ENCODE measurements at regions of chr14 and their contacts with region 1.

Region 1: DNA sequence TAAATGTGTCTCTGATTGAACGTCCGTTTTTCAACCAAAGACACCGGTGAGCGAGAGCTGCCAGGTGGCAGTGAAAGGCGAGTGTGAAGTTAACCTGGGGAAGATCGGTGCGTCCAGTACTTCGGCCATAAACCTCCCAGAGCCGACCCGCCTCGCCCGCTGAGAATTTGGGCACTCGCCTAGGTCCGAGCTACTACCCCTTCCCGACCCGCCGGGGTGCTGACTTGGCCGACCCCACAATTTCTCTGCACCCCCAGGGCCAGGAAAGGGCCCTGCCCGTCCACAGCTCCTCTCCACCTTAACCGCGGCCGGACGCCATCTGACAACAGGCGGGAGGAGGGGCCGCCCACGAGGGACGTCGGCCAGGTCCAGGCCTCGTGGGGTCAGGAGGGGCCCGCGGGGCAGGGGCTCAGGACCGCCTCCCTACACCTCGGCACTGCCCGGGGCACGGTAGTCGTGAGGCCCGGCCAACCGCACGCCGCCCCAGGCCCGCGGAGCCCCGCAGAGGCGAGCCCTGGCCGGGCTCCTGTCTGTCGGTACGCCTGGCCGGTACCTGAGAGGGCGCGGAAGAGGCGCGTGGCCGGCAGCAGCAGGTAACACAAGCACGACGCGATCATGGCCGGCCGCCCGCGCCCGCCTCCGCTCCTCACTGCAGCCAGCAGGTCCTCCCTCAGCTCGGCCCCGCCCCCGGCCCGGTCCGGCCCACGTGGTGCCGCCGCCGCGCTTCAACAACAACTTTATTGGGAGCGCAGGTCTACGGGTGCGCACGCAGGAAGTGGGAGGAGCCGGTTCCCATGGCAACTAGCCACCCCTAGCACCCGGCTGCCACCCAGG is at the start of gene ANGEL1:
- DNase-seq: peak; percentile 88 to 96 (median 90)
- H3K4me3 ChIP-seq: peak within 1 kb of the TSS; percentile 65 to 98 (median 91)
- H3K27ac ChIP-seq: peak within 1 kb of the TSS; percentile 67 to 96 (median 90)
- H3K27me3 ChIP-seq: no peaks in the 10 kb centered on the region
- CTCF ChIP-seq: peak in 32 of 56 donors; percentile 10 to 54 (median 30)
- total RNA-seq, gene ANGEL1: 25.7 to 56.1 (median 41.1) TPM

Region 2: GRCh38 chr14:76710056-76711010 is 102.1 kb before region 1 on chr14:
- intact Hi-C with region 1: loop called in 1 of 2 experiments (anchors 2 kb)
- DNase-seq: peak in 2 of 10 donors; percentile 35 to 40
- H3K4me3 ChIP-seq: no peak overlapping the region
- H3K27ac ChIP-seq: peak overlapping the region in 5 of 59 donors; percentile 8 to 32 (median 27)
- H3K27me3 ChIP-seq: no peaks in the 10 kb centered on the region
- CTCF ChIP-seq: peak; percentile 50 to 92 (median 85)

Region 3: GRCh38 chr14:76793956-76794355 is 18.5 kb before region 1 on chr14:
- intact Hi-C with region 1: no loop called
- DNase-seq: no peak
- H3K4me3 ChIP-seq: no peak overlapping the region
- H3K27ac ChIP-seq: no peak overlapping the region
- H3K27me3 ChIP-seq: no peaks in the 10 kb centered on the region
- CTCF ChIP-seq: no peak

Region 4: DNA sequence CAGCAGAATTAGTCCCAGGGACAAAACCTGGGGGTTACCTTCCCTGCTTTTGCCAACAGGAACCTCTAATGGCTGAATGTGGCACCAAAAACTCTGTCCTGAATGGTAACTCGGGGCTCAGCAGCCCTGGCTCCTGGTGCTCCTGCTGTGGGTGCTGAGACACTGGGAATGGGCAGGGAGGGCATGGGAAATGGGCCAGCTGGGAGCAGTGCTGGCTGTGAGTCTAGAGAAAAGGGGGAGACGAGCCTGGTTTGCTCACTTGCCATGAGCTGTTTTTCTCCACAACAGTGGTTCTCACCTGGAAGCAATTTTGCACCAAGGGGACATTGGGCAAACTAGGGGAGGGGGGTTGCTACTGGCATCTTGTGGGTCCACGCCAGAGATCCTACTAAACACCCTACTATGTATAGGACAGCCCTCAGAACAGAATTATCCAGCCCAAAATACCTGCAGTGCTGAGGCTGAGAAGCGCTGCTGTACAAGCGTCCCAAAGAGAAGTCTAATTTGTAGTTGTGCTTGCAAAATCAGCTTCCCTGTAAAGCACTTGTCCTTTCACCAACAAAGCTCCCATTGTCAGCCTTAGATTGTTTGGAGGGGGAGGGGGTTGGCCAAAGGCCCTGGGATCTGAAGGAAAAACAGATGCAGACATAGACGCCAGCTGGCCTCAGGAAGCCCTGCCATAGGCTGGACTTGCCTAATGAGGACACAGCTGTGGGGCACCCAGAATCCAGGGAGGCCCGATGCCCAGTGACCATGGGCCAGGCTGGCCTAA is 17.4 kb after region 1 on chr14:
- intact Hi-C with region 1: loop called (anchors 2 kb)
- DNase-seq: peak; percentile 24 to 98 (median 91)
- H3K4me3 ChIP-seq: peak overlapping the region in 41 of 59 donors; percentile 1 to 59 (median 26)
- H3K27ac ChIP-seq: peak overlapping the region; percentile 23 to 98 (median 91)
- H3K27me3 ChIP-seq: no peaks in the 10 kb centered on the region
- CTCF ChIP-seq: peak in 13 of 56 donors; percentile 3 to 39 (median 17)

Measured in dorsolateral prefrontal cortex (tissue), 120 donors.